ENCODE measurements at regions of chr14 and their contacts with region 1.

Region 1: GRCh38 chr14:65024957-65025356 is 38.3 kb downstream of the FNTB start:
- DNase-seq: peak; percentile 67
- H3K4me3 ChIP-seq: no peak overlapping the region
- H3K27ac ChIP-seq: peak overlapping the region; percentile 69 to 81
- H3K4me1 ChIP-seq: peaks cover 6% of the 10 kb centered on the region
- H3K27me3 ChIP-seq: no peaks in the 10 kb centered on the region
- CTCF ChIP-seq: no peak
- POLR2A ChIP-seq: no peak

Region 2: DNA sequence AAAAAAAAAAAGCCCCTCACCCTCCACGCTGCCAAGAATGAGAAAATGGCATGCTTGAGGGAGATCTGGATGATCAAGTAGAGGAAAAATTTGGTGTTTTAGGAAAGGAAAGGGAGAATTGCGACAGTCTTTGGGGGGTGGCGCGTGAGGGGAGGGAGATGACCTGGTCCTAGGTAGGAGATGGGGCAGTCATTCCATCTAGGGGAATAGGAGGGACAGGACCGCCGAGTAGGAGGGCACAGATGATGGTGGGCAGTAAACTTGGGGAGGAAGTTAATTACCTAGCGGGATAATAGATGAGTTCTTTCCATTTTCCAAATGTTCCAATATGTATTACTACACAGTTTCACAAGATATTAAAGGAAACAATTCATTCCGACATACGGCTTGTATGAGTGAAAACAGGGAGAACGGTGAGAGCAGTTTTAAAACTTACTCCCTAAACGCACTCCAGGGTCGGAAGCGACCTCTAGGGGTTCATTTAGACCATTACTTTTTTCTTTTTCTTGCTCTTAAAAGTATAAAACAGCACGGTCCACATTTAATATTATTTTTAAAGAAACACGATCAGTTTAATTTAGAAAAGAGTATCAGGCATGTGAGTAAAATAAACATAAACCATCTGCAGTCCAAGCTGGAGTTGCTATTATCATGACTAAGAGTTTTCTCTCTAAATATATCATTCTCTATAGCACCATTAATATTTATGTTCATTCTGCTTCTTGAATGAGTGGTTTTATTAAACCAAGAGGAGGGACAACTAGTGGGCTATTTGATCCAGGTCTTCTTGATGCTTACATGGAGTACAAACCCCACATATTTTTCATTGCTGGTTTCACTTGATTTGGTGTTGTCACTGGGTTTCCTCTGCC is 41.3 kb before region 1 on chr14:
- intact Hi-C with region 1: no loop called
- DNase-seq: peak; percentile 43
- H3K4me3 ChIP-seq: no peak overlapping the region
- H3K27ac ChIP-seq: no peak overlapping the region
- H3K4me1 ChIP-seq: no peaks in the 10 kb centered on the region
- H3K27me3 ChIP-seq: no peaks in the 10 kb centered on the region
- CTCF ChIP-seq: peak in 3 of 4 experiments; percentile 44 to 72 (median 70)
- POLR2A ChIP-seq: no peak

Region 3: GRCh38 chr14:65074449-65075150 is 49.6 kb after region 1 on chr14:
- intact Hi-C with region 1: loop called (anchors 5 kb)
- DNase-seq: no peak
- H3K4me3 ChIP-seq: no peak overlapping the region
- H3K27ac ChIP-seq: peak overlapping the region; percentile 8 to 36
- H3K4me1 ChIP-seq: peaks cover 25% of the 10 kb centered on the region
- H3K27me3 ChIP-seq: no peaks in the 10 kb centered on the region
- CTCF ChIP-seq: no peak
- POLR2A ChIP-seq: no peak

Region 4: DNA sequence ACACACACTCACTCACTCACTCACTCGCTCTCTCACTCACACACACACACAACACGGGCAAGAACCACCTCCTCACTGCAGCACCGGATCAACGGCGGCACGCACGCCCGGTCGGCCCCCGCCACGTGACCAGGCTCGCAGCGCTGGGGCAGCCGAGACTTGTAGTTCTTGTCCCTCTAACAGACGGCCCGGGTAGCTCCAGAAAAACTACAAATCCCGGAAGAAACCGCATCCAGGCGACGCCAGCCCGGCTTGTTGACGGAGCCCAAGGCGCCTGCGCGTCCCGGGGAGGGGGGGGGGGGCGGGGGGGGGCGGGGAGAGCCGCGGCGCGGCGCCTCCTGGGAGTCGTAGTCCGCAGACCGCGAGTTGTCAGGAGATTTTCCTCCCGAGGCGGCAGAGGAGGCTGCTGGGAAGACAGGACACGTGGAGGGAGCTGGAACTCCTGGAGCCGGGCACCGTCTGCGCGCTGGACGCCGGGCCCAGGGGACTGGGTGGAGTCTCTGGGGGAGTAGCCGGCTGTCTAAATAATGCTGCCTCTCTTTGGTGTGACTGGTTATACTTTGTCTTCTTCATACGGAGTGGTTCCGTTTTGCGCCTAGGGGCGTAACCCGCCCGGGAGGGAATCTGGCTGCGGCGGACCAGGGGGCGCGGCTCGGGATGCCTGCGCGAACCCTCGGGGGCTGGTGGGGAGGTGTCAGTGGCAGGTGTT is 77.6 kb after region 1 on chr14 and contains the start of gene MAX:
- intact Hi-C with region 1: loop called (anchors 5 kb)
- DNase-seq: peak; percentile 99
- H3K4me3 ChIP-seq: peak within 1 kb of the TSS; percentile 91 to 96
- H3K27ac ChIP-seq: peak within 1 kb of the TSS; percentile 86 to 90
- H3K4me1 ChIP-seq: peaks cover 8% of the 10 kb centered on the region
- H3K27me3 ChIP-seq: no peaks in the 10 kb centered on the region
- CTCF ChIP-seq: no peak
- POLR2A ChIP-seq: peak; percentile 93
- total RNA-seq, gene MAX: 73.2 to 79.0 TPM

Region 5: GRCh38 chr14:65277027-65277426 is 252.1 kb after region 1 on chr14:
- intact Hi-C with region 1: no loop called
- DNase-seq: no peak
- H3K4me3 ChIP-seq: no peak overlapping the region
- H3K27ac ChIP-seq: no peak overlapping the region
- H3K4me1 ChIP-seq: no peaks in the 10 kb centered on the region
- H3K27me3 ChIP-seq: no peaks in the 10 kb centered on the region
- CTCF ChIP-seq: no peak
- POLR2A ChIP-seq: no peak

Region 6: DNA sequence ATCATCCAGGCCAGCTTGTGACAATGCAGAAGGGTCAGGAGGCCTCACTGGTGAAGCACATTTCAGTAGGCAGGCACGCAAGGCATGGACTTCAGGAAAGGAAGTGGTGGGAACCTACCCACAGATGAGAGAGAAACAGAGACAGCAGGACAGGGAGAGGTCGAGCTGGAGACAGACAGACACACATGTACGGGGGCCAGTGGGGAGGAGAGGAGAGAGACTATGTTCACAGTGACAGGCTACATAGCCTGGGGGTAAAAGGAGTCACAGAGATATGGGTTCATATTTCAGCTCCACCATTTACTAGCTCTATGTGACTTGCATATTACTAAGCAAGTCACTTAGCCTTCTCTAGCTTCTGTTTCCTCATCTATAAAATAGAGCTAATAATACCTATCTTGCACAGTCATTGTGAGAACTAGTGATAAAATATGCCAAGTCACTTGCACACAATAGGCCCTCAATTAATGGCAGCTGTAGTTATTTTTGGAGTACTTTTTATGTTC is 296.5 kb after region 1 on chr14:
- intact Hi-C with region 1: no loop called
- DNase-seq: no peak
- H3K4me3 ChIP-seq: no peak overlapping the region
- H3K27ac ChIP-seq: no peak overlapping the region
- H3K4me1 ChIP-seq: no peaks in the 10 kb centered on the region
- H3K27me3 ChIP-seq: no peaks in the 10 kb centered on the region
- CTCF ChIP-seq: no peak
- POLR2A ChIP-seq: no peak